PC-3 (cell line): ENCODE measurements at regions of chr10 and their contacts with region 1.

Region 1: DNA sequence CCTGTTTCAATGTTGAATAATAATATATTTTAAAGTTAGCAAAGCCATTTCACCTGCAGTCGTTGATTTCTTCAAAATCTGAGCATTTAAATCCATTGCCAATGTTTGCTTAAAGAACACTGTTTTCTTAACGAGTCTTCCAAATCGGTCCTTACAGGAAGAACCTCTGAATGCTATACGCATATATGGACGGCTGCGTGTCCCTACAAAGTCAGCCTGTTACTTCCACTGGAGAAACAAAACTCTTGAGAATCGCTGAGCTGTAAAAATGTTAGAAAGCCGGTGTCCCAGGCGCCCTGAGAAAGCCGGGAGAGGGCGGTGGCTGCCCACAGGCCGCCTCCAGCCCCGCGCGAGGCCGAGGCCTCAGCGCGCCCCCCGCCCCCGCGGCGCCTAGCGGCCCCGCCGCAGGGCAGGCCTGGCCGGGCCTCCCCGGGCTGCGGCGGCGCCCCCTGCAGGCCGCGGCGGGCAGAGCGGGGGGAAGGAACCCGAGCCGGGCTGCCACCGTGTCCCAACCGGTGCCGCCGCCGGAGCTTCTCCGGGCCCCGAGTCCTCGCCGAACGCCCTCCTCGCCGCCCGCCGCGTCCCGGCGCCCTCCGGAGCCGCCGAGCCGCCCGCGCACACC is at the start of gene FHIP2A:
- DNase-seq: peak; percentile 76
- ATAC-seq: peak; percentile 80
- H3K4me3 ChIP-seq: peak within 1 kb of the TSS; percentile 99
- H3K27ac ChIP-seq: peak within 1 kb of the TSS; percentile 79
- H3K4me1 ChIP-seq: peaks cover 25% of the 10 kb centered on the region
- H3K27me3 ChIP-seq: no peaks in the 10 kb centered on the region
- CTCF ChIP-seq: 0 out of 2 replicates have a peak, but pooled peaks have one; percentile 26
- total RNA-seq, gene FHIP2A: 3.7 and 4.6 TPM in 2 replicates

Region 2: DNA sequence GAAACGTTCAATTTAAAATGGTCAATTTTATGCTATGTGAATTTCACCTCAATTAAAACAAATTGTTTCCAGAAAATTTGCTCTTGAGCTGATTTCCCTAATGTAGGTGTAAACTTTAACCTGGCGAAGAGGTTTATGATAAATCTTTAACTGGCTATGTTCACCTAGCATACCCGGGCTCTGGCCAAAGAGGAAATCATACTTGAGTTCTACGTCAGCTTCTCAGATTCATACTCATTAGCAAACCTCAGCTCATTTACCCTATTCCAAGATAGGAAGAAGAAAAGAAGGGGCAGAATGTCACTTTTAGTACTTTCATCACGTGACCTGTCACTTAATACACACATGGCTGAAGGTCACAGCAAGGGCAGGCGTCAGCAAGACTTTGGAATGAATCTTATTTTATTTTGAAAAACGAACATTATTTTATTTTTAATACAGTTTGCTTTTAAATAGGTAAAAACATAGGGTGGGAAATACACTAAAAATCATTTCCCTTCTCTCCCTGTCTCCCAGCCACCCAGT is 260.3 kb before region 1 on chr10:
- CTCF ChIA-PET with region 1: interaction called, 15 read pairs
- POLR2A ChIA-PET with region 1: no interaction called
- intact Hi-C with region 1: no loop called
- DNase-seq: no peak
- ATAC-seq: no peak
- H3K4me3 ChIP-seq: no peak overlapping the region
- H3K27ac ChIP-seq: no peak overlapping the region
- H3K4me1 ChIP-seq: 0 out of 2 replicates have a peak, but pooled peaks cover 3% of the 10 kb centered on the region
- H3K27me3 ChIP-seq: no peaks in the 10 kb centered on the region
- CTCF ChIP-seq: no peak

Region 3: DNA sequence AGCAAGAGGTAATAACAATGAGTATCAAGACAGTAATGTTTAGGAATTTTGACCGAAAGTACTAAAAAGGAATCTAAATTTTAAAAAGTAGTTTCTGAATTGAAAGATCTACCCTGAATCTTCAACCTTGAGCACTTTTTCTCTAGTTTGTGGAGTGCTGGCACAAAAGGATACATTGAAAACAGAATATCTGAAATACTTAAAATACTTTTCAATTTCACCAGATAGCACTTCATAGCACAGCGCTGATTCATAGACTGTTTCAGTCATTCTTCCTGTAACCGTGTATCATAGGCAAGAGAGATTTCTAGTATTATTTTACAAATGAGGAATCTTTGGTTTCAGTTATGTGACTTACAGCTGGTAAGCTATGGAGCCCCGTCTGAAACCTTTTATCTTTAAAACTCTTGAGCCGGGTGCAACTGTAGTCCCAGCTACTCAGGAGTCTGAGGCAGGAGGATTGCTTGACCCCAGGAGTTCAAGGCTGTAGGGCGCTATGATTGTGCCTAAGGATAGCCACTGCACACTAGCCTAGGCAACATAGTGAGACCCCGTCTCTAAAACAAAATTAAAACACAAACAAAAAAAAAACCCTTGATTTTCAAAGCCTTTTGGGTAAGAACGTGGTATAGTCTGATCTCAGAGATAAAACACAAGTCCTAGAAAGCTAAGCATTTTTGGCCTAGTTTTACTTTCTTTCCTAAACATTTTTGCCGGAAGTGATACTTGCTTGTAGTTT is 35.3 kb after region 1 on chr10:
- CTCF ChIA-PET with region 1: no interaction called
- POLR2A ChIA-PET with region 1: no interaction called
- intact Hi-C with region 1: loop called (anchors 5 kb)
- DNase-seq: peak; percentile 65
- ATAC-seq: peak; percentile 91
- H3K4me3 ChIP-seq: 0 out of 2 replicates have a peak overlapping the region, but pooled peaks have one; percentile 9
- H3K27ac ChIP-seq: peak overlapping the region; percentile 34; the same call in 1 of the 2 replicates
- H3K4me1 ChIP-seq: peaks cover 18% of the 10 kb centered on the region
- H3K27me3 ChIP-seq: no peaks in the 10 kb centered on the region
- CTCF ChIP-seq: no peak